ENCODE measurements at regions of chr1 and their contacts with region 1.

Region 1: GRCh38 chr1:197924516-197925123 is 7.4 kb downstream of the LHX9 start:
- DNase-seq: peak; percentile 58
- H3K4me3 ChIP-seq: no peak overlapping the region
- H3K27ac ChIP-seq: no peak overlapping the region
- H3K4me1 ChIP-seq: peaks cover 3% of the 10 kb centered on the region
- H3K27me3 ChIP-seq: peaks cover 27 to 33% of the 10 kb centered on the region in 2 experiments
- CTCF ChIP-seq: peak; percentile 60 to 63
- POLR2A ChIP-seq: no peak

Region 2: GRCh38 chr1:197521118-197521739 is 403.4 kb before region 1 on chr1:
- CTCF ChIA-PET with region 1: interaction called, 12 read pairs
- POLR2A ChIA-PET with region 1: no interaction called
- dilution Hi-C with region 1: no loop called
- intact Hi-C with region 1: loop called (anchors 1 kb)
- DNase-seq: peak; percentile 46
- H3K4me3 ChIP-seq: no peak overlapping the region
- H3K27ac ChIP-seq: no peak overlapping the region
- H3K4me1 ChIP-seq: no peaks in the 10 kb centered on the region
- H3K27me3 ChIP-seq: no peaks in the 10 kb centered on the region
- CTCF ChIP-seq: peak; percentile 39 to 51
- POLR2A ChIP-seq: no peak

Region 3: DNA sequence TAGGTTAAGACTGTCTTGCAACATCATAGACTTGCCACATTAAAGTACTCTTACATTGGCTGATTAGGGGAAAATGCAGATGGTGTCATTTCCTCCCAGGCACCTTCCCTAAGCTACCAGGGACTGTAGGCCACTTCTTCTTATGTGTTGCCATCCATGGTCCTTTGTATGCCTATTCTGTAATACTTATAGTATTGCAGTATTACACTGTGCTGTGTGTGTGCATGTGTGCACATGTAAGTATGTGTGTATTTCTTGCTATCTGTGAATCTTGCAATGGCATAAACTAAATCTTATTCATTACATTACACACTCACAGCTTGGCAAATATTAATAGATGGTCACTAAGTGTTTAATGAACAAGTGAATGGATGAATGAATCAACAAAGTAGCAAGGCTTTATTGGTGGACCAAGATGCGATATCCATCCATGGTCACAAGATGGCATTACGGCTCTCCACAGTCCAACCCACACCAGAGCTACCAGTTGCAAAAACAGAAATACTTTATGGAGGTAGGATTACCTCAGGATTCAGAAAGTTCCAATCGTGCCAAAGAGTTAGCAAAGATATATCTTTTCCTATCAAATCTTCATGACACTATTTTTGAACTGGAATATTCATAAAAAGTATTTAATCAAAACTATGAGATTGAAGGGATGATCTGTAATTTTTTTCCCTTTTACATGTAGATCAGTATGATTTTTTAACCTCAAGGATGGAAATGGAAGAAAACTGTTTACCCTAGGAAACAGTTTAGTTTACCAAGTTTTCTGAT is 309.5 kb before region 1 on chr1:
- CTCF ChIA-PET with region 1: interaction called, 18 read pairs
- POLR2A ChIA-PET with region 1: no interaction called
- dilution Hi-C with region 1: no loop called
- intact Hi-C with region 1: loop called (anchors 1 kb)
- DNase-seq: peak; percentile 55
- H3K4me3 ChIP-seq: no peak overlapping the region
- H3K27ac ChIP-seq: no peak overlapping the region
- H3K4me1 ChIP-seq: no peaks in the 10 kb centered on the region
- H3K27me3 ChIP-seq: no peaks in the 10 kb centered on the region
- CTCF ChIP-seq: peak; percentile 51 to 57
- POLR2A ChIP-seq: no peak